CD4-positive, alpha-beta memory T cell (primary cell): ENCODE measurements at regions of chr18 and their contacts with region 1.

Region 1: GRCh38 chr18:13216092-13216582 is 2.4 kb upstream of the LDLRAD4 start:
- DNase-seq: peak; percentile 52 to 64 (median 59)
- H3K4me3 ChIP-seq: peak overlapping the region in 1 of 2 donors; percentile 61
- H3K4me3 Mint-ChIP-seq: peak overlapping the region; percentile 87 to 97 (median 92)
- H3K27ac ChIP-seq: no peak overlapping the region
- H3K27ac Mint-ChIP-seq: peak overlapping the region; percentile 53 to 98 (median 90)
- H3K4me1 ChIP-seq: peaks cover 26% of the 10 kb centered on the region
- H3K4me1 Mint-ChIP-seq: peaks cover 13 to 29% (median 24%) of the 10 kb centered on the region in 4 donors
- H3K27me3 ChIP-seq: no peaks in the 10 kb centered on the region
- H3K27me3 Mint-ChIP-seq: peaks cover 4 to 30% of the 10 kb centered on the region in 2 donors

Region 2: GRCh38 chr18:13266218-13267100 is 50.3 kb after region 1 on chr18:
- CTCF ChIA-PET with region 1: interaction called, 15 read pairs
- POLR2A ChIA-PET with region 1: interaction called, 6 read pairs
- intact Hi-C with region 1: no loop called
- DNase-seq: peak in 4 of 5 donors; percentile 34 to 48 (median 42)
- H3K4me3 ChIP-seq: peak overlapping the region; percentile 6 to 57
- H3K4me3 Mint-ChIP-seq: peak overlapping the region; percentile 60 to 85 (median 76)
- H3K27ac ChIP-seq: peak overlapping the region; percentile 50
- H3K27ac Mint-ChIP-seq: peak overlapping the region; percentile 77 to 96 (median 93)
- H3K4me1 ChIP-seq: peaks cover 50% of the 10 kb centered on the region
- H3K4me1 Mint-ChIP-seq: peaks cover 33 to 65% (median 51%) of the 10 kb centered on the region in 4 donors
- H3K27me3 ChIP-seq: no peaks in the 10 kb centered on the region
- H3K27me3 Mint-ChIP-seq: peaks cover 0 to 7% of the 10 kb centered on the region in 2 donors

Region 3: GRCh38 chr18:13381944-13382365 is 165.8 kb after region 1 on chr18:
- CTCF ChIA-PET with region 1: interaction called, 26 read pairs
- POLR2A ChIA-PET with region 1: interaction called, 12 read pairs
- intact Hi-C with region 1: loop called (anchors 1 kb)
- DNase-seq: peak; percentile 56 to 76 (median 69)
- H3K4me3 ChIP-seq: peak overlapping the region; percentile 40 to 63
- H3K4me3 Mint-ChIP-seq: peak overlapping the region; percentile 83 to 97 (median 90)
- H3K27ac ChIP-seq: peak overlapping the region; percentile 89
- H3K27ac Mint-ChIP-seq: peak overlapping the region; percentile 98 to 100 (median 99)
- H3K4me1 ChIP-seq: peaks cover 68% of the 10 kb centered on the region
- H3K4me1 Mint-ChIP-seq: peaks cover 49 to 76% (median 71%) of the 10 kb centered on the region in 4 donors
- H3K27me3 ChIP-seq: no peaks in the 10 kb centered on the region
- H3K27me3 Mint-ChIP-seq: no peaks in the 10 kb centered on the region

Region 4: DNA sequence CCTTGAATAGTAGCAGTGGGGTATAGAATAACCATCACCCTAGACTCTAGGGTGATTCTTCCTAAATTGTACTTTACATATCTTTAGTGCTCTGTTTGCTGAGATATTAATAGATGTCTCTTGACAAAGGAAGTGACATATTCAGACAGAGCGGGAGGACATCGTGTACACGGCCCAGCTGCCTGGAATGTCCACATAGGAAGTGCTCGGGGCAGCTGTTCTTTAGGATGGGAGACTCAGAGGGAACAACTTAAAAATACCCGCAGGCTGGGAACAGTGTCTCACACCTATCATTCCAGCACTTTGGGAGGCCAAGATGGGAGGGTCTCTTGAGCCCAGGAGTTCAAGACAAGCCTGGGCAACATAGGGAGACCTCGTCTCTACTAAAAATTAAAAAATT is 304.2 kb after region 1 on chr18:
- CTCF ChIA-PET with region 1: interaction called, 15 read pairs
- POLR2A ChIA-PET with region 1: no interaction called
- intact Hi-C with region 1: loop called (anchors 2 kb)
- DNase-seq: no peak
- H3K4me3 ChIP-seq: no peak overlapping the region
- H3K4me3 Mint-ChIP-seq: no peak overlapping the region
- H3K27ac ChIP-seq: no peak overlapping the region
- H3K27ac Mint-ChIP-seq: peak overlapping the region in 2 of 7 donors; percentile 32 to 46
- H3K4me1 ChIP-seq: no peaks in the 10 kb centered on the region
- H3K4me1 Mint-ChIP-seq: peaks cover 7 to 15% (median 13%) of the 10 kb centered on the region in 4 donors
- H3K27me3 ChIP-seq: no peaks in the 10 kb centered on the region
- H3K27me3 Mint-ChIP-seq: no peaks in the 10 kb centered on the region

Region 5: GRCh38 chr18:13558124-13558523 is 342.0 kb after region 1 on chr18:
- CTCF ChIA-PET with region 1: interaction called, 15 read pairs
- POLR2A ChIA-PET with region 1: no interaction called
- intact Hi-C with region 1: loop called (anchors 1 kb)
- DNase-seq: peak in 2 of 5 donors; percentile 10 to 16
- H3K4me3 ChIP-seq: no peak overlapping the region
- H3K4me3 Mint-ChIP-seq: peak overlapping the region in 1 of 8 donors; percentile 16
- H3K27ac ChIP-seq: no peak overlapping the region
- H3K27ac Mint-ChIP-seq: peak overlapping the region in 2 of 7 donors; percentile 10 to 58
- H3K4me1 ChIP-seq: peaks cover 10% of the 10 kb centered on the region
- H3K4me1 Mint-ChIP-seq: peaks cover 16 to 20% (median 18%) of the 10 kb centered on the region in 4 donors
- H3K27me3 ChIP-seq: no peaks in the 10 kb centered on the region
- H3K27me3 Mint-ChIP-seq: no peaks in the 10 kb centered on the region

Region 6: DNA sequence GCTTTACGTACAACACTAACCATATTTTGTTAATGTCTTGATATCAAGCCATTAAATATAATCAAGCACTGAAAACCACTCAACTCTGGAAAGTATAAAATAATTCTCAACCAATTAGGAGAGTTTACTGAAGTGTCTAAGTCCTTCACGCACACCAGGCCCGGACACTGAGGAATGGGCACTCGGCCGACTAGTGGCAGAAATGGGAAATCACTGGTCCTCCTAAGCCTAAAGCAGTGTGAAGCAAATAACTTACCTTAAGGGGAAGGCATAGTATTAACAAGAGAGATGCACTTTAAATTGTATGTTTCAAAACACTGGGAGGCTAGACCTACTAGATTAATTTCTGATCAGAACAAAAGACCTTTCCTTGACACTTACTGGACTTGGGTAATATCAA is 464.5 kb after region 1 on chr18:
- CTCF ChIA-PET with region 1: interaction called, 4 read pairs
- POLR2A ChIA-PET with region 1: no interaction called
- intact Hi-C with region 1: loop called (anchors 2 kb)
- DNase-seq: no peak
- H3K4me3 ChIP-seq: no peak overlapping the region
- H3K4me3 Mint-ChIP-seq: no peak overlapping the region
- H3K27ac ChIP-seq: no peak overlapping the region
- H3K27ac Mint-ChIP-seq: no peak overlapping the region
- H3K4me1 ChIP-seq: no peaks in the 10 kb centered on the region
- H3K4me1 Mint-ChIP-seq: peaks cover 0 to 11% (median 7%) of the 10 kb centered on the region in 4 donors
- H3K27me3 ChIP-seq: no peaks in the 10 kb centered on the region
- H3K27me3 Mint-ChIP-seq: no peaks in the 10 kb centered on the region

Region 7: DNA sequence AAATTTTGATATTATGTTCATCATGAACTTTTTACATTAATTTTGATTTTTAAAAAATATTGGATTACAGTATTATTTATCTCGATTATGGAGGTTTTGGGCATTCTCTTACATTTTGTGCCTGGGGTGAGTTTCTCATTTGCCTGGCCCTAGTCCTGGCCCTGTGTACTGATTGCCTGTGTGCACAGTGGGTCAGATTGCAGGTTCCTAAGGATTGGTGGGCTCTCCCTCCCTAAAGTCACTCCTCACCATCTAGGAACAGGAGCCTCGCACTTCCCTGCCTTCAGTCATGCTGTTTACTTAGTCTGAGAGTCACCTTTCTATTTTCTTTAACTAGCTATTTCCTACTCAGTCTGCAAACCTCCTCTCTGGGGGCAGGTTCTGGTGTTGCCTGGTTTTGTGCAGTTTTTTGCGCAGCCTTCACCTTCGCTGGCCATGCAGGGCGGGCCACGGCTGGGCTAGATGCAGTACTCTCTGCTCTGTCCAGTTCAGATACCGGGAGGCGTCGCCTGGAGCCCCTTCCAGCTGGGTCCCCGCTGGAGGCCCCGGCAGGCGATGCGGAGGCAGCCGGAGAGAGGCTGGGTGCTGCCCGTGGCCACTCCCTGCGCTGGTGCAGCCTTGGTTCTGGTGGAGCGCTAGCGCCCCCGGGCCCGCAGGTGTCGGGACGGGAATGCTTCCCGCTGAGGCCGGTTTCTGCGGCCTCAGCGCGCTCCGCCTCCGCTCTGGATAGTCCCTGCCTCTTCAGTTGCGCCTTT is 584.5 kb after region 1 on chr18:
- CTCF ChIA-PET with region 1: no interaction called
- POLR2A ChIA-PET with region 1: no interaction called
- intact Hi-C with region 1: loop called (anchors 1 kb)
- DNase-seq: peak in 3 of 5 donors; percentile 23 to 25 (median 24)
- H3K4me3 ChIP-seq: no peak overlapping the region
- H3K4me3 Mint-ChIP-seq: peak overlapping the region in 7 of 8 donors; percentile 41 to 84 (median 50)
- H3K27ac ChIP-seq: no peak overlapping the region
- H3K27ac Mint-ChIP-seq: no peak overlapping the region
- H3K4me1 ChIP-seq: peaks cover 7% of the 10 kb centered on the region
- H3K4me1 Mint-ChIP-seq: peaks cover 3 to 6% (median 5%) of the 10 kb centered on the region in 4 donors
- H3K27me3 ChIP-seq: peaks cover 13% of the 10 kb centered on the region
- H3K27me3 Mint-ChIP-seq: peaks cover 45 to 48% of the 10 kb centered on the region in 2 donors